Heart left ventricle (tissue), 16 donors: ENCODE measurements at regions of chr11 and their contacts with region 1.

Region 1: DNA sequence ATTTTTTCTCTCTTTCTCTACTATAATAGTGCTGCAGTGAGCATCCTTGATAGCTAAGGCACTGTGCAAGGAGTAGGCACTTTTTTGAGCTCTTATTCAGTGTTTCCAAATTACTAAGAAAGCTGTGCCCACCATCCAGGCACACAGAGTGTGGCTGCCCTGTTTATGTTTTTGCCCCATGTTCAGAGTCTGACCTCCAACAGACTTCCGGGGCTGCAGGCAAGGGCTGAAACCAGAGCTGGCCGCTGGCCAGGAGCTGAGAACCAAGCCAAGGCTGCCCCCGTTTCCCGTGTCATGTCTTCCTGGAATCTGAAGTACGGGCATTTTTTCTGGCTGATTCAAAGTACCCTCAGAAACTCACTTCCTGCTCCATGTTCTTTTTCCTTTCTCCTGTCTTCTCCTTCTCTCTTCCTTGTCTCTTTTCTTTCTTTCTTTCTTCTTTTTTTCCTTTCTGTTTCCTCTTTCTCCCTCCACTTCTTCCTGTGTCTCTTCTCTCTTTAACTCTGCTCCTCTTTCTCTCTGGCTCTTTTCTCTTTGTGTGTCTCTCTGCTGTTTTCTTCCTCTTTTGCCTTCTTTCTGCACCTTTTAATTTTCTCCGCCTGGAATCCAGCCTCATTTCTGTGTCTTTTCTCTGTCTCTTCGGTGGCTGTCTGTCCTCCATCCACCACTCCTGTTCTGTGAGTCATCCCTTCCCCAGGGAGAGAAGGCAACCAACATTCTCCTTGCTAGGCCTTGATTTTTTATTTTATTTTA is 17.0 kb upstream of the KCTD14 start:
- DNase-seq: peak; percentile 56 to 85 (median 69)
- ATAC-seq: peak in 3 of 4 donors; percentile 45 to 82 (median 73)
- H3K4me3 ChIP-seq: peak overlapping the region in 8 of 12 donors; percentile 10 to 38 (median 19)
- H3K27ac ChIP-seq: peak overlapping the region in 11 of 12 donors; percentile 29 to 87 (median 58)
- H3K4me1 ChIP-seq: peaks cover 0 to 20% (median 10%) of the 10 kb centered on the region in 12 donors
- H3K27me3 ChIP-seq: no peaks in the 10 kb centered on the region
- CTCF ChIP-seq: no peak
- POLR2A ChIP-seq: no peak

Region 2: GRCh38 chr11:77568916-77569675 is 471.0 kb before region 1 on chr11:
- intact Hi-C with region 1: no loop called
- DNase-seq: no peak
- ATAC-seq: no peak
- H3K4me3 ChIP-seq: no peak overlapping the region
- H3K27ac ChIP-seq: no peak overlapping the region
- H3K4me1 ChIP-seq: no peaks in the 10 kb centered on the region
- H3K27me3 ChIP-seq: no peaks in the 10 kb centered on the region
- CTCF ChIP-seq: no peak
- POLR2A ChIP-seq: no peak

Region 3: GRCh38 chr11:77968337-77968736 is 71.8 kb before region 1 on chr11:
- intact Hi-C with region 1: no loop called
- DNase-seq: no peak
- ATAC-seq: no peak
- H3K4me3 ChIP-seq: no peak overlapping the region
- H3K27ac ChIP-seq: no peak overlapping the region
- H3K4me1 ChIP-seq: peaks cover 0 to 7% (median 0%) of the 10 kb centered on the region in 12 donors
- H3K27me3 ChIP-seq: no peaks in the 10 kb centered on the region
- CTCF ChIP-seq: no peak
- POLR2A ChIP-seq: no peak

Region 4: DNA sequence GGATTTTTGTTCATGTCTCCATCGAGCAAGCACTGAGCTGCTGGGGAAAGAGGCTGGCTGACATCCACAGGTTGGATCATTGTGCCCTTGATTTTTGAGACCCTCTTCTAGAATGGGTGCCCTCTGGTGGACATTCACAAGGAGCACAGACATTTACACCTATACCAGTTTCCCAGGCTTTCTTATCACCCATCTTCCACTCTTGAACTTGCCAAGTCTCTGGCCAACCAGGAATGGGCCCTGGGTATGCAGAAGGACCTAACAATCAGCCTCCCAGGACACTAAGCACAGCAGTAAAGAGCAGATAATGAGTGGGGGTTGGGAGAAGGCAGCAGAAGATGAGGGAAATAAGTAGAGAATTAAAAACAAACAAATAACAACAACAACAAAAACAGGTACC is 39.9 kb before region 1 on chr11:
- intact Hi-C with region 1: loop called in 4 of 10 experiments (anchors 5 to 10 kb)
- DNase-seq: peak in 1 of 5 donors; percentile 29
- ATAC-seq: peak in 3 of 4 donors; percentile 48 to 73 (median 70)
- H3K4me3 ChIP-seq: no peak overlapping the region
- H3K27ac ChIP-seq: no peak overlapping the region
- H3K4me1 ChIP-seq: peaks cover 0 to 5% (median 3%) of the 10 kb centered on the region in 12 donors
- H3K27me3 ChIP-seq: peaks cover 0 to 5% (median 0%) of the 10 kb centered on the region in 9 donors
- CTCF ChIP-seq: peak; percentile 43 to 66 (median 48)
- POLR2A ChIP-seq: no peak

Region 5: GRCh38 chr11:78011301-78011700 is 28.8 kb before region 1 on chr11:
- intact Hi-C with region 1: no loop called
- DNase-seq: no peak
- ATAC-seq: no peak
- H3K4me3 ChIP-seq: no peak overlapping the region
- H3K27ac ChIP-seq: no peak overlapping the region
- H3K4me1 ChIP-seq: no peaks in the 10 kb centered on the region
- H3K27me3 ChIP-seq: no peaks in the 10 kb centered on the region
- CTCF ChIP-seq: no peak
- POLR2A ChIP-seq: no peak